Left colon (tissue), 2 donors: ENCODE measurements at regions of chr6 and their contacts with region 1.

Region 1: DNA sequence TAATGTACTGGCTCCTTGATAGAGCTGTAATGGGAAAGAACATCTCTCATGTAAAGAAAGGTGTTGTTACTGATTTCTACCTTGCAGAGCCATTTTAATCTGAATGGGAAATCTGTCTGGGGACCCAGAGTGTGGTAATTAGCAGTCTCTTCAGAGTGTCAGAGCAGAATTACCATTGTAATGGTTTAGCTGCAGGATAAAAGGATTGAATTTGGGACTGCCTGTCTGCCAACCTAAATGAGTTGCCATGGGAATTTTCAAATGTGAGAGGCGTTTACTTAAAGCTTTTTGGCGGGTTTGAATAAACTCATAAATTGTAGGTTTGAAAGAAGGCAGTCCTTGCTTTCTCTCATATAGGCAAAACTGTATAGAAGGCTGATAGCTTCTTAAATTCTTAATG is 128.8 kb downstream of the QKI start:
- DNase-seq: no peak
- ATAC-seq: no peak

Region 2: DNA sequence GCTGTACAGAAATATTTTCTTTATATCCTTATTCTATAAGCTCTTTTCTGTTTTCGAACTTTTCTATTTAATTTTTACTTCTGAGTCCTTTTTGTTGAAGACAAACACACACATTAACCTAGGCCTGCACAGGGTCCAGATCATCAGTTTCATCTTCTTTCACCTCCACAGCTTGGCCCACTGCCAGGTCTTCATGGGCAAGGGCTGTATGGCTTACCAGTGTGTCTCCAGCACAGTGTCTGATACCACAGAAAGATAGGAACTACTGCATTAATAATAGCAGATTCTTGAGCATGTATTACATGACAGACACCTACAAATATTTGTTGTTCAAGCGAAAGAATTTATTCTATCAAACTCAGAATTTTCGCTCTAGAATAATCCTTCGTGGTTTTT is 104.4 kb before region 1 on chr6:
- intact Hi-C with region 1: loop called in 1 of 2 experiments (anchors 10 kb)
- DNase-seq: peak in 1 of 2 donors; percentile 59
- ATAC-seq: no peak